GM12878 (cell line): ENCODE measurements at regions of chr9 and their contacts with region 1.

Region 1: GRCh38 chr9:114681594-114682332 is at the start of gene TEX48:
- DNase-seq: peak; percentile 19
- ATAC-seq: peak; percentile 99
- H3K4me3 ChIP-seq: no peak within 1 kb of the TSS
- H3K27ac ChIP-seq: no peak within 1 kb of the TSS
- H3K4me1 ChIP-seq: no peaks in the 10 kb centered on the region
- H3K27me3 ChIP-seq: peaks cover 0 to 9% of the 10 kb centered on the region in 2 experiments; a peak in 2 of 4 replicates
- CTCF ChIP-seq: peak; percentile 83 to 86 (median 85)
- EP300 ChIP-seq: no peak
- POLR2A ChIP-seq: no peak
- RAD21 ChIP-seq: peak; percentile 88
- polyA plus RNA-seq, gene TEX48: not detected

Region 2: DNA sequence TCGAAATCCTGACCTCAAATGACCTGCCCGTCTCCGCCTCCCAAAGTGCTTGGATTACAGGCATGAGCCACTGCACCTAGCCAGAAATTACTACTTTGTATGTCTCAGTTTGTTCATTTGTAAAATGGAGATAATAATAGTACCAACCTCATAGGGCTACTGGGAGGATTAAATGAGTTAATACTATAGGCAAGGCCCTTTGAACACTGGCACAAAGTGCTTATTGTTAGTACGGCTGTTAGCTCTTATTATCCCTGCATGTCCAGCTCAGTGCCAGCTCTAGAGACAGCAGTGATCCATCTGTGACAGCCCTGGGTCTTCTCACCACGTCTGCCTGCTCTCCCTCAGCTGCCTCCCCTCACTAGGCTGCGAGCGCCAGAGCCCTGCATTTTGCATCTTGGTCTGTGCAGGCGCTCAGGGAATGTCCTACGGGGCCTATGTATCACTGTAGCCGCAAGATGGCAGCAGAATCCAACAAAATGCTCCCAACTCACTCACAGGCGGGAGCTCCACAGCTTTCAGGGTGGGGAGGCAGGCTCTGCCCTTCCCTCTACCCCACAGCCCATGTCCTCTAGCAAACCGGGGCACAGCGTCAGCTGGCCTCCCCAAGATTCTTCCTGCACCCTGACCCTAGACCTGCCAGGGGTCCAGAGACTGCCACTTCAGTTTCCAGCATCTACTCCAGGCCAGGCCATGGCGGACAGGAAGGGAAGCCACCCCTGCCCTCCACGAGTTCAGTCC is 276.3 kb before region 1 on chr9:
- CTCF ChIA-PET with region 1: interaction called, 17 read pairs
- POLR2A ChIA-PET with region 1: no interaction called
- RAD21 ChIA-PET with region 1: interaction called, 4 read pairs
- SMC1A ChIA-PET with region 1: interaction called, 8 read pairs
- in situ Hi-C with region 1: no loop called
- intact Hi-C with region 1: no loop called
- DNase-seq: no peak
- ATAC-seq: peak; percentile 98
- H3K4me3 ChIP-seq: no peak overlapping the region
- H3K27ac ChIP-seq: no peak overlapping the region
- H3K4me1 ChIP-seq: peaks cover 5% of the 10 kb centered on the region; the same call in 1 of the 2 replicates
- H3K27me3 ChIP-seq: no peaks in the 10 kb centered on the region; a peak in 1 of 4 replicates
- CTCF ChIP-seq: peak; percentile 76 to 93 (median 84)
- EP300 ChIP-seq: no peak
- POLR2A ChIP-seq: no peak
- RAD21 ChIP-seq: peak; percentile 91

Region 3: GRCh38 chr9:114697951-114698351 is 16.2 kb after region 1 on chr9:
- CTCF ChIA-PET with region 1: interaction called, 42 read pairs
- POLR2A ChIA-PET with region 1: no interaction called
- RAD21 ChIA-PET with region 1: interaction called, 8 read pairs
- SMC1A ChIA-PET with region 1: interaction called, 17 read pairs
- in situ Hi-C with region 1: no loop called
- intact Hi-C with region 1: no loop called
- DNase-seq: peak; percentile 16
- ATAC-seq: peak; percentile 68
- H3K4me3 ChIP-seq: 0 out of 2 replicates have a peak overlapping the region, but pooled peaks have one; percentile 2
- H3K27ac ChIP-seq: peak overlapping the region; percentile 14
- H3K4me1 ChIP-seq: peaks cover 39% of the 10 kb centered on the region
- H3K27me3 ChIP-seq: peaks cover 3 to 8% of the 10 kb centered on the region in 2 experiments; a peak in 3 of 4 replicates
- CTCF ChIP-seq: no peak
- EP300 ChIP-seq: peak; percentile 4 to 64; a peak in 2 of 4 replicates
- POLR2A ChIP-seq: no peak
- RAD21 ChIP-seq: no peak

Region 4: DNA sequence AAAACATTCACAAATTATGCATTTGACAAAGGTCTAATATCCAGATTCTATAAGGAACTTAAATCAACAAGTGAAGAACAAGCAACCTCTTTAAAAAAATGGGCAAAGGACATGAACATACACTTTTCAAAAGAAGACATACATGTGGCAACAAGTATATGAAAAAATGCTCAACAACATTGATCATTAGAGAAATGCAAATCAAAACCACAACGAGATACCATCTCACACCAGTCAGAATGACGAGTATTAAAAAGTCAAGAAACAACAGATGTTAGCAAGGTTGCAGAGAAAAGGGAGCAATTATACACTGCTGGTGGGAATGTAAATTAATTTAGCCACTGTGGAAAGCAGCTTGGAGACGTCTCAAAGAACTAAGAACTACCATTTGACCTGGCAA is 163.0 kb after region 1 on chr9:
- CTCF ChIA-PET with region 1: no interaction called
- POLR2A ChIA-PET with region 1: no interaction called
- RAD21 ChIA-PET with region 1: no interaction called
- SMC1A ChIA-PET with region 1: no interaction called
- in situ Hi-C with region 1: no loop called
- intact Hi-C with region 1: no loop called
- DNase-seq: no peak
- ATAC-seq: no peak
- H3K4me3 ChIP-seq: no peak overlapping the region
- H3K27ac ChIP-seq: no peak overlapping the region
- H3K4me1 ChIP-seq: no peaks in the 10 kb centered on the region
- H3K27me3 ChIP-seq: no peaks in the 10 kb centered on the region
- CTCF ChIP-seq: no peak
- EP300 ChIP-seq: no peak
- POLR2A ChIP-seq: no peak
- RAD21 ChIP-seq: no peak

Region 5: GRCh38 chr9:114906908-114907571 is 225.3 kb after region 1 on chr9:
- CTCF ChIA-PET with region 1: interaction called, 36 read pairs
- POLR2A ChIA-PET with region 1: no interaction called
- RAD21 ChIA-PET with region 1: interaction called, 16 read pairs
- SMC1A ChIA-PET with region 1: interaction called, 12 read pairs
- in situ Hi-C with region 1: loop called (anchors 5 kb)
- intact Hi-C with region 1: loop called (anchors 1 kb)
- DNase-seq: no peak
- ATAC-seq: peak; percentile 76
- H3K4me3 ChIP-seq: no peak overlapping the region
- H3K27ac ChIP-seq: no peak overlapping the region
- H3K4me1 ChIP-seq: peaks cover 13% of the 10 kb centered on the region
- H3K27me3 ChIP-seq: no peaks in the 10 kb centered on the region
- CTCF ChIP-seq: peak; percentile 34 to 50 (median 39); a peak in 4 of 6 replicates
- EP300 ChIP-seq: no peak
- POLR2A ChIP-seq: no peak
- RAD21 ChIP-seq: peak; percentile 67

Region 6: DNA sequence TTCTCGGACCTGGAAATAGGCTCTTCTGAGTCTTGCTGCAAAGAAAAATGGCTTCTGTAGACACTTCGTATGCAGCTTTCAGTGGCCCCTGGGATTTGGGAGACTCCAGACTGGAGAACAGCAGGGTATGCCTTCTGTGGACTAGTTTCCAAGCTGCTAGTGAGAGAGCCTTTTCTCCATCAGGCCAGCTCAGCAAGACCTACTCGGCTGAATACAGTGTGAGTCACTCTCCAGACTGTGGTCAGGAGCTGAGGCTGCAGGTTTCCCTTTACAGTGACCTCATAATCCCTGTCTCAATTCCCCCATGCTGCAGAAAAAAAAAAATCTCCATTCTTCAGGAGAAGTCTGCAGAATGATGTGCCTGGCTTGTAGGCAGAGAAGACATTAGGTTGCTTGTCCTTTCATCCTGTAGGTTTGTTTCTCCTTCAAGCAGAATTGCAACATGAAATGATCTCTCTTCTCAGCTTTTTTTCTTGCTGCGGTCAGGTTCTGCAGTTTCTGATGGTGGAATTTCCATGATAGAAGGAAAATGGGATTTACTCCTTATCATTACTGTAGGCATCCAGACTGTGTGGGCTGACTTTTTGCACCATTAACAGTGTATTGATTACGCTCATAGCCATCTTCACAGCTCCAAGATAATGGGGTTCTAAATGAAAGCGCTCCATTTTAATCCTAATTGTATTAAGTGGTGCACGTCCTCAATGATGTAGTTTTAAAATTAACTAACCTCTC is 326.9 kb after region 1 on chr9:
- CTCF ChIA-PET with region 1: interaction called, 18 read pairs
- POLR2A ChIA-PET with region 1: no interaction called
- RAD21 ChIA-PET with region 1: interaction called, 6 read pairs
- SMC1A ChIA-PET with region 1: interaction called, 10 read pairs
- in situ Hi-C with region 1: loop called (anchors 5 kb)
- intact Hi-C with region 1: no loop called
- DNase-seq: no peak
- ATAC-seq: peak; percentile 56
- H3K4me3 ChIP-seq: no peak overlapping the region
- H3K27ac ChIP-seq: no peak overlapping the region
- H3K4me1 ChIP-seq: no peaks in the 10 kb centered on the region
- H3K27me3 ChIP-seq: peaks cover 0 to 5% of the 10 kb centered on the region in 2 experiments; a peak in 2 of 4 replicates
- CTCF ChIP-seq: no peak
- EP300 ChIP-seq: no peak
- POLR2A ChIP-seq: no peak
- RAD21 ChIP-seq: no peak

Region 7: GRCh38 chr9:115306865-115307264 is 625.1 kb after region 1 on chr9:
- CTCF ChIA-PET with region 1: no interaction called
- POLR2A ChIA-PET with region 1: no interaction called
- RAD21 ChIA-PET with region 1: no interaction called
- SMC1A ChIA-PET with region 1: no interaction called
- in situ Hi-C with region 1: no loop called
- intact Hi-C with region 1: no loop called
- DNase-seq: no peak
- ATAC-seq: no peak
- H3K4me3 ChIP-seq: no peak overlapping the region
- H3K27ac ChIP-seq: no peak overlapping the region
- H3K4me1 ChIP-seq: no peaks in the 10 kb centered on the region
- H3K27me3 ChIP-seq: no peaks in the 10 kb centered on the region
- CTCF ChIP-seq: no peak
- EP300 ChIP-seq: no peak
- POLR2A ChIP-seq: no peak
- RAD21 ChIP-seq: no peak

Region 8: GRCh38 chr9:115524453-115525059 is 842.8 kb after region 1 on chr9:
- CTCF ChIA-PET with region 1: interaction called, 4 read pairs
- POLR2A ChIA-PET with region 1: no interaction called
- RAD21 ChIA-PET with region 1: no interaction called
- SMC1A ChIA-PET with region 1: no interaction called
- in situ Hi-C with region 1: loop called (anchors 10 kb)
- intact Hi-C with region 1: loop called (anchors 1 kb)
- DNase-seq: no peak
- ATAC-seq: peak; percentile 69
- H3K4me3 ChIP-seq: no peak overlapping the region
- H3K27ac ChIP-seq: no peak overlapping the region
- H3K4me1 ChIP-seq: no peaks in the 10 kb centered on the region
- H3K27me3 ChIP-seq: no peaks in the 10 kb centered on the region
- CTCF ChIP-seq: peak; percentile 54 to 68 (median 59); a peak in 5 of 6 replicates
- EP300 ChIP-seq: no peak
- POLR2A ChIP-seq: no peak
- RAD21 ChIP-seq: peak; percentile 84